ENCODE measurements at regions of chr14 and their contacts with region 1.

Region 1: GRCh38 chr14:93137864-93138263 is 22.1 kb upstream of the ITPK1 start:
- DNase-seq: no peak
- ATAC-seq: no peak
- H3K4me3 Mint-ChIP-seq: no peak overlapping the region
- H3K27ac Mint-ChIP-seq: no peak overlapping the region
- H3K4me1 Mint-ChIP-seq: peaks cover 2% of the 10 kb centered on the region
- H3K27me3 Mint-ChIP-seq: no peaks in the 10 kb centered on the region

Region 2: GRCh38 chr14:93033983-93034670 is 103.7 kb before region 1 on chr14:
- CTCF ChIA-PET with region 1: interaction called, 3 read pairs
- POLR2A ChIA-PET with region 1: no interaction called
- intact Hi-C with region 1: loop called in 1 of 2 experiments (anchors 1 kb)
- DNase-seq: peak; percentile 60
- ATAC-seq: peak; percentile 79
- H3K4me3 Mint-ChIP-seq: no peak overlapping the region
- H3K27ac Mint-ChIP-seq: peak overlapping the region; percentile 53
- H3K4me1 Mint-ChIP-seq: peaks cover 21% of the 10 kb centered on the region
- H3K27me3 Mint-ChIP-seq: no peaks in the 10 kb centered on the region

Region 3: GRCh38 chr14:93184388-93185353 is 46.8 kb after region 1 on chr14 and contains the starts of genes LYSET and MOAP1:
- CTCF ChIA-PET with region 1: no interaction called
- POLR2A ChIA-PET with region 1: no interaction called
- intact Hi-C with region 1: no loop called
- DNase-seq: peak; percentile 95
- ATAC-seq: peak; percentile 90
- H3K4me3 Mint-ChIP-seq: peak within 1 kb of the TSS; percentile 91
- H3K27ac Mint-ChIP-seq: peak within 1 kb of the TSS; percentile 93
- H3K4me1 Mint-ChIP-seq: peaks cover 40% of the 10 kb centered on the region
- H3K27me3 Mint-ChIP-seq: no peaks in the 10 kb centered on the region
- total RNA-seq, gene LYSET: 9.9 to 10.2 TPM
- total RNA-seq, gene MOAP1: 11.7 to 15.9 TPM

Region 4: DNA sequence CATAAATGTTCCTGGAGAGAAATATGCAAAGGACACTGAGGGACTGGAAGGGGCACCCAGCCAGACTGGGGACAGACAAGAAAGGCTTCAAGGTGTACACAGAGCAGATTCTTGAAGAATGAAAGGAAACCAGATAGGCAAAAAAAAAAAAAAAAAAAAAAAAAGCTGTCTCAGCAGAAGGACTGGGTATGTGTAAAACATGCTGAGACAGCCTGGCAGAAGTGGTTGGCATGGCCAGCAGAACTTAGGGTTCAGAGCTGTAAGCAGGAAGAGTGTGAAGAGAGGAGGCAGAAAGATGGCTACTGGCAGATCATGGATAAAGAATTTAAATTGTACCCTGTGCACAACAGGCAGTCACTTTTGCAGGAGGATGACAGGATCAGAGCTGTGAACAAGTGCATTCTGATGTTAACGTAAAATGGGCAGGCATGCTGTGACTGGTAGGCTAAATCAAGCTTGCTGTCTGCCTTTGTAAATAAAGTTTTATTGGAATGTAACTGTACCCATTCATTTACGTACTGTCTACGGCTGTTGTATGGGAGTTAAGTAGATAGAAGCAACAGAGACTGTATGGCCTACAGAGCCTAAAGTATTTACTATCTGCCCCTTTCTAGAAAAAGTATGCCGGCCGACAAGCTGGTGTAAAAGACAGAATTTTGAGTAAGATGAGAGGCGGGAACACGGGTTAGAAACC is 111.4 kb after region 1 on chr14:
- CTCF ChIA-PET with region 1: no interaction called
- POLR2A ChIA-PET with region 1: no interaction called
- intact Hi-C with region 1: no loop called
- DNase-seq: no peak
- ATAC-seq: no peak
- H3K4me3 Mint-ChIP-seq: no peak overlapping the region
- H3K27ac Mint-ChIP-seq: no peak overlapping the region
- H3K4me1 Mint-ChIP-seq: no peaks in the 10 kb centered on the region
- H3K27me3 Mint-ChIP-seq: no peaks in the 10 kb centered on the region